ENCODE measurements at regions of chr2 and their contacts with region 1.

Region 1: GRCh38 chr2:18749912-18750526 is 160.7 kb upstream of the NT5C1B start:
- DNase-seq: peak; percentile 65
- ATAC-seq: 0 out of 3 replicates have a peak, but pooled peaks have one; percentile 19
- H3K4me3 ChIP-seq: no peak overlapping the region
- H3K27ac ChIP-seq: no peak overlapping the region
- H3K4me1 ChIP-seq: peaks cover 21% of the 10 kb centered on the region
- H3K27me3 ChIP-seq: no peaks in the 10 kb centered on the region
- CTCF ChIP-seq: peak; percentile 72
- EP300 ChIP-seq: no peak
- POLR2A ChIP-seq: no peak
- RAD21 ChIP-seq: peak; percentile 58; the same call in 1 of the 2 replicates

Region 2: GRCh38 chr2:17398770-17399169 is 1351.2 kb before region 1 on chr2:
- CTCF ChIA-PET with region 1: no interaction called
- POLR2A ChIA-PET with region 1: no interaction called
- in situ Hi-C with region 1: no loop called
- intact Hi-C with region 1: no loop called
- DNase-seq: no peak
- ATAC-seq: no peak
- H3K4me3 ChIP-seq: no peak overlapping the region
- H3K27ac ChIP-seq: no peak overlapping the region
- H3K4me1 ChIP-seq: no peaks in the 10 kb centered on the region
- H3K27me3 ChIP-seq: no peaks in the 10 kb centered on the region
- CTCF ChIP-seq: no peak
- EP300 ChIP-seq: no peak
- POLR2A ChIP-seq: no peak
- RAD21 ChIP-seq: no peak

Region 3: GRCh38 chr2:18435421-18436037 is 314.5 kb before region 1 on chr2:
- CTCF ChIA-PET with region 1: no interaction called
- POLR2A ChIA-PET with region 1: no interaction called
- in situ Hi-C with region 1: no loop called
- intact Hi-C with region 1: loop called (anchors 1 kb)
- DNase-seq: peak; percentile 58
- ATAC-seq: peak; percentile 59
- H3K4me3 ChIP-seq: no peak overlapping the region
- H3K27ac ChIP-seq: no peak overlapping the region
- H3K4me1 ChIP-seq: no peaks in the 10 kb centered on the region
- H3K27me3 ChIP-seq: 0 out of 5 replicates have a peak, but pooled peaks cover 0 to 10% of the 10 kb centered on the region in 2 experiments
- CTCF ChIP-seq: peak; percentile 76
- EP300 ChIP-seq: no peak
- POLR2A ChIP-seq: no peak
- RAD21 ChIP-seq: 0 out of 2 replicates have a peak, but pooled peaks have one; percentile 31

Region 4: GRCh38 chr2:18799397-18799796 is 49.4 kb after region 1 on chr2:
- CTCF ChIA-PET with region 1: no interaction called
- POLR2A ChIA-PET with region 1: no interaction called
- in situ Hi-C with region 1: no loop called
- intact Hi-C with region 1: loop called (anchors 1 kb)
- DNase-seq: no peak
- ATAC-seq: no peak
- H3K4me3 ChIP-seq: no peak overlapping the region
- H3K27ac ChIP-seq: no peak overlapping the region
- H3K4me1 ChIP-seq: peaks cover 31% of the 10 kb centered on the region
- H3K27me3 ChIP-seq: peaks cover 0 to 26% of the 10 kb centered on the region in 2 experiments; a peak in 3 of 5 replicates
- CTCF ChIP-seq: no peak
- EP300 ChIP-seq: no peak
- POLR2A ChIP-seq: no peak
- RAD21 ChIP-seq: no peak

Region 5: DNA sequence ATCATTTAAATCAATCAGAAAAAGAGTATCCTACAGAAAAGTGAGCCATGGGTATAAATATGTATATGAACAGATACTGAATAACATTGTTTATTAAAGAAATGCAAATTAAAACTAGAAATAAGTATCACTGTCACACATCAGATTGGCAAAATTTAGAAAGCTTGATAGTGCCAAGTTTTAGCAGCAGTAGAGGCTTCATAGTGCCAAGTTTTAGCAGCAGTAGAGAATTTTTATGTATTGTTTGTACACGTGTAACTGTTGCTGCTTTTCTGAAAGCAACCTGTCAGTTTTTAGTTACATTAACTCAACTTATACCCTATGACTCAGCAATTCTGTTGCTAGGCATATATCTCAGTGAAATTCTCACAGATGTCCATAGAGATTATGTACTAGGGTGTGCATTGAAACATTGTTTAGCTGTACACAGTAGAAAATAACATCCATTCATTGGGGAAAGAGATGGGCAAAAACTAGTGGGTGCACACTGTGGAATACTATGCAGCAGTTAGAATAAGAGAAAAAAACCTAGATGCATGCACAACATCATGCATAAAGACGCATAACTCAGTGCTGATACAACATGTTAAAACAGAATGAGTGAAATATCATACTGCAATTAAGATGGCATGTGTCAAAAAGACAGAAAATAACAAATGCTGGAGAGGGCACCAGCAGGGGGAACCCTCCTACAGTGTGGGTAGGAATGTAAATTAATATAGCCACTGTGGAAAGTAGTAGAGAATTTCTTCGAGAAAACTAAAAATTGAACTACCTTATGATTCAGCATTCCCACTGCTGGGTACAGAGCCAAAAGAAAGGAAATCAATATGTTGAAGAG is 133.8 kb after region 1 on chr2:
- CTCF ChIA-PET with region 1: no interaction called
- POLR2A ChIA-PET with region 1: no interaction called
- in situ Hi-C with region 1: no loop called
- intact Hi-C with region 1: loop called (anchors 2 kb)
- DNase-seq: peak; percentile 7
- ATAC-seq: peak; percentile 53; the same call in 2 of the 3 replicates
- H3K4me3 ChIP-seq: no peak overlapping the region
- H3K27ac ChIP-seq: no peak overlapping the region
- H3K4me1 ChIP-seq: peaks cover under 1% of the 10 kb centered on the region
- H3K27me3 ChIP-seq: no peaks in the 10 kb centered on the region
- CTCF ChIP-seq: peak; percentile 57
- EP300 ChIP-seq: no peak
- POLR2A ChIP-seq: no peak
- RAD21 ChIP-seq: no peak

Region 6: GRCh38 chr2:19140596-19141219 is 390.7 kb after region 1 on chr2:
- CTCF ChIA-PET with region 1: no interaction called
- POLR2A ChIA-PET with region 1: no interaction called
- in situ Hi-C with region 1: no loop called
- intact Hi-C with region 1: loop called (anchors 10 kb)
- DNase-seq: peak; percentile 99
- ATAC-seq: peak; percentile 100
- H3K4me3 ChIP-seq: no peak overlapping the region
- H3K27ac ChIP-seq: no peak overlapping the region
- H3K4me1 ChIP-seq: peaks cover 19% of the 10 kb centered on the region
- H3K27me3 ChIP-seq: no peaks in the 10 kb centered on the region
- CTCF ChIP-seq: no peak
- EP300 ChIP-seq: peak; percentile 75 to 93
- POLR2A ChIP-seq: no peak
- RAD21 ChIP-seq: no peak

Region 7: DNA sequence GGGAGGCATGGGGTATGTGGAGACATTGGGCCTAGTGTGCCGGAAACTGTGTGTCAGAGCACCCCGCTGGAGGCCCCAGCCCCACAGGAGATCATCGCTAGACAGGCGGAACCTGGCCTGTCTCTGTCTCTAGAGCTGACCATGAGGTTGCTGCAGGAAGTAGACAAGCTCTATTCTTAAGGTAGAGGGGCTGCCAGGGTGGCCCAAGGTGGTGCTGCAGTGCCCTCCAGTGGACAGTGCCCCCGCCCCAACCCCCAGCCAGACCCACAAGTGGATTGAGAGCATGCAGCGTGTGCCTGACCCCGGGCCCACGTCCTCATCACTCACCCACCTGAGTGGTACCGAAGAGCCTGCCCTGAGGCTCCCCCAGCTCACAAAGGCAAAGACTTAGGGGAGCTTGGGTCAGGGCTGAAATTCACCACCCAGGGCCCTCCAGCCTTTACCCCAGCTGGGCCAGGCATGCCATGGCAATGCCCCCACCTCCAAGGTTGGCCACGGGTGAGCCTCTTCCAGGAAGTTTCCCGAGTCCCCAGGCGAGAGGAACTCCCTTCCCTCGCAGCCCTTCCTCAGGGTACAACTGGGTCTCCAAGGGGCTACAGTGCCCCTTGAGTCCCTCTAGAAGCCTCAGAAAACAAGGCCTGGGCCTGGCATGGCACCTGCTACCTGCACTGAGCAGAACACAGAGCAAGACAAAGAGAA is 996.7 kb after region 1 on chr2:
- CTCF ChIA-PET with region 1: no interaction called
- POLR2A ChIA-PET with region 1: no interaction called
- in situ Hi-C with region 1: no loop called
- intact Hi-C with region 1: loop called (anchors 5 kb)
- DNase-seq: peak; percentile 19
- ATAC-seq: peak; percentile 75
- H3K4me3 ChIP-seq: no peak overlapping the region
- H3K27ac ChIP-seq: no peak overlapping the region
- H3K4me1 ChIP-seq: peaks cover 14% of the 10 kb centered on the region
- H3K27me3 ChIP-seq: peaks cover 4 to 17% of the 10 kb centered on the region in 2 experiments; a peak in 4 of 5 replicates
- CTCF ChIP-seq: peak; percentile 79
- EP300 ChIP-seq: no peak
- POLR2A ChIP-seq: no peak
- RAD21 ChIP-seq: peak; percentile 46